ENCODE measurements at regions of chr11 and their contacts with region 1.

Region 1: DNA sequence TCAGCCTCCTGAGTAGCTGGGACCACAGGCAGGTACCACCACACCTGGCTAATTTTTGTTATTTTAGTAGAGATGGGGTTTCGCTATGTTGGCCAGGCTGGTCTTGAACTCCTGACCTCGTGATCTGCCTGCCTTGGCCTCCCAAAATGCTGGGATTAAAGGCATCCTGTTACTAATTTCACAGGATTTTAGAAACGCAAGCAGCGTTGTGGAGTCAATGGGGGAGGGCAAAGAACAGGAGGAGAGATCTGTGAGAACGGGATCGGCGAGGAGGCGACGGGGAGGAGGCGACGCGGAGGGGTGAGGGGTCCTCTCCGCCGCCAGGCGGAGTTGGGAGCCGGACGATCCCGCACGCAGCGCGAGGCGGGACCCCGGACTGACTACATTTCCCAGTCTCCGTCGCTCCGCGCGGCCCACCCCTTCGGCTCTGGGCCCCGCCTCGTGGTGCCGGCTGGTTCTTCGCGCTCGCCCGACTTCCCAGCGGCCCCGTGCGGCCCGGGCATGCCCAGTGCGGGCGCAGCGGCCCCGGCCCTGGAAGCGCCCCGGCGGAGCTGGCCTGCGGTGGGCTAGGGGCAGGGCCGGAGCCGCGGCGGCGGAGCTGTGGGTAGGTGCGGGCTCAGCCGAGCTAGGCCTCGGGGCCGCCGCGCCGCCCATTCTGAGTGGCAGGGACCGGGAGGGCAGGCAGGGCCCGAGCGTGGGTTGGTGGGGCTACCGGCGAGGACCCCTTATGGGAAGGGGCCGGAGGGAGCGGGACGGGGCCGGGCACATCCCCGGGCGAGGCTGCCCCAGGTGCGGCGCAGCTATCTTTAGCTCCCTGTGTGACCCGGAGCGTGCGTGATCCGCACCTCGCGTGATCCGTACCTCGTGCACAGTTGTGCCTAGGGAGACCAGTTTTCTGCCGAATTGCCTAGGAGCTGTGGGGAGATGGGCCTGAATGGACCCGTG is at the start of gene EI24:
- DNase-seq: peak; percentile 93
- H3K4me3 ChIP-seq: peak within 1 kb of the TSS; percentile 98
- H3K27ac ChIP-seq: peak within 1 kb of the TSS; percentile 55
- H3K4me1 ChIP-seq: peaks cover 20% of the 10 kb centered on the region
- CTCF ChIP-seq: peak; percentile 64
- total RNA-seq, gene EI24: 66.8 and 77.4 TPM in 2 replicates

Region 2: GRCh38 chr11:125592305-125593112 is 23.3 kb after region 1 on chr11 and contains the start of gene STT3A:
- CTCF ChIA-PET with region 1: interaction called, 4 read pairs
- POLR2A ChIA-PET with region 1: interaction called, 13 read pairs
- intact Hi-C with region 1: loop called (anchors 1 kb)
- DNase-seq: peak; percentile 99
- H3K4me3 ChIP-seq: peak within 1 kb of the TSS; percentile 90
- H3K27ac ChIP-seq: peak within 1 kb of the TSS; percentile 78
- H3K4me1 ChIP-seq: peaks cover 25% of the 10 kb centered on the region
- CTCF ChIP-seq: no peak
- total RNA-seq, gene STT3A: 60.6 and 87.9 TPM in 2 replicates

Region 3: DNA sequence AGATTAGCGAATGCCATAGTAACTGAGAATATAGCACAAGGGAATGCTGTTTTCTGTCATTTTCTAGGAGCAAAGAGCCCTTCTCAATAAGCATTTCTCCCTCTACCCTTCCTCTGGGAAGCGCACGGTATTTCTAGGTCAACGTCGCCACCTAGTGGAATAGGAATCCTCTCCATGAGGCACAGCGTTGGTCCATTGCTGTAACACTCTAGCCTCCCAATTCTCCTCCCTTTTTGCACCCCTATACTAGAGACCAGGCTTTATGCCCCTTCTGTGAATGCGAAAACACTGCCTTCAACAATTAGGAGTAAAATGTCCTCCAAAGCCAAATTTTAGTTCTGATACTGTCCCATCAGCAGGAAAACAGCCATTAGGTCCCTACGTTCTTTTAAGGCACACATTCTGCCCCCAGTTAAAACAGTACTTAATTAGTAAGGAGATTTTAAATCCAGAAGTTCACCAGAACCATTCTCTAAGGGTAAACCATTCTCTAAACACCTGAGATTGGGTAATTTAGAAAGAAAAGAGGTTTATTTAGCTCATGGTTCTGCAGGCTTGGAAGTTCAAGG is 305.4 kb after region 1 on chr11:
- CTCF ChIA-PET with region 1: no interaction called
- POLR2A ChIA-PET with region 1: no interaction called
- intact Hi-C with region 1: loop called (anchors 5 kb)
- DNase-seq: peak; percentile 61
- H3K4me3 ChIP-seq: no peak overlapping the region
- H3K27ac ChIP-seq: no peak overlapping the region
- H3K4me1 ChIP-seq: peaks cover 3% of the 10 kb centered on the region
- CTCF ChIP-seq: peak; percentile 81

Region 4: GRCh38 chr11:125887373-125888324 is 318.4 kb after region 1 on chr11 and contains the start of gene HYLS1:
- CTCF ChIA-PET with region 1: no interaction called
- POLR2A ChIA-PET with region 1: interaction called, 8 read pairs
- intact Hi-C with region 1: loop called (anchors 5 kb)
- DNase-seq: peak; percentile 98
- H3K4me3 ChIP-seq: peak within 1 kb of the TSS; percentile 83
- H3K27ac ChIP-seq: peak within 1 kb of the TSS; percentile 87
- H3K4me1 ChIP-seq: peaks cover 47% of the 10 kb centered on the region
- CTCF ChIP-seq: peak; percentile 57
- total RNA-seq, gene HYLS1: 25.1 and 31.5 TPM in 2 replicates